ENCODE measurements at regions of chr6 and their contacts with region 1.

Region 1: DNA sequence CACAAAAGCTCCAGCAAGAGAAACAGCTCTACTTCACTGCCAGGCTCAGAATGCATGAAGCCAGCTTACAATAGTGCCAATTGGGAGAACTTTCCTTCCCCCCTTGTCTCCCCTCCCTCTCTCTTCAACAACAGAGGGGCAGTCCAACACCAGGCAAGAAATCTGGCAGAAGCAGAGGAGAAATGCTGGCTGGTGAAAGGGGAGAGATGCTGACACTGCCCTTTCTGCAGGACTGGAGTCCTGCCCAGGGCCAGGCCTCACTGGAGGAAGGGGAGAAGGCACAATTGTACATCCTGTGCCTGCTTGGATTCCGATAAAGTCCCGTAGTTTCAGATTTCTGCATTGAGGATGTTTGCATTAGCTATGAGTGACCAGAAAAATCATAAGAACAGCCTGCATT is 148.6 kb downstream of the LRRC1 start:
- DNase-seq: peak in 1 of 2 donors; percentile 56
- ATAC-seq: peak; percentile 84
- H3K4me3 ChIP-seq: no peak overlapping the region
- H3K27ac ChIP-seq: peak overlapping the region in 1 of 2 donors; percentile 52
- H3K4me1 ChIP-seq: peaks cover 0 to 2% of the 10 kb centered on the region in 2 donors
- H3K27me3 ChIP-seq: no peaks in the 10 kb centered on the region

Region 2: GRCh38 chr6:53794720-53795253 is 148.6 kb before region 1 on chr6 and contains the start of gene LRRC1:
- intact Hi-C with region 1: no loop called
- DNase-seq: peak; percentile 94 to 98
- ATAC-seq: peak; percentile 96
- H3K4me3 ChIP-seq: peak within 1 kb of the TSS; percentile 77 to 80
- H3K27ac ChIP-seq: peak within 1 kb of the TSS; percentile 54 to 70
- H3K4me1 ChIP-seq: no peaks in the 10 kb centered on the region
- H3K27me3 ChIP-seq: no peaks in the 10 kb centered on the region
- total RNA-seq, gene LRRC1: 25.3 to 25.4 TPM

Region 3: DNA sequence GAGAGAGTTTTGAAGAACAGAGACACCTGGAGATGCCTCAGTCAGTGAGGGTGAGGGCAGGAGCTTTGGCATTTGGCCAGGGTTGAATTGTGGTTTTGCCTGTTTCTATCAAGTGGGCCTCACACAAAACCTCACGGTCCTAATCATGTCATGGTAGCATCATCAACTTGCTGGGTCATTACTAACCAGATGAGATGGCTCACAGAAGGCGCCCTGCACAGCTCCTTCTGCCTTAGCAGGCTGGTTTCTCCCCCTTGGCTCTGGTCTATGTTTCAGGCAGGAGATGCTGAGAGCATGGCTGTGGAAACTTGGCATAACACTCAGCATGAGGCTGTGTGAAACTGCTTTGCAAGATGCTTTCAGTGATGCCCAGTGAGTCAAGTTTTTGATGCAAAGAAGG is 49.3 kb before region 1 on chr6:
- intact Hi-C with region 1: loop called in 1 of 2 experiments (anchors 5 kb)
- DNase-seq: no peak
- ATAC-seq: no peak
- H3K4me3 ChIP-seq: no peak overlapping the region
- H3K27ac ChIP-seq: no peak overlapping the region
- H3K4me1 ChIP-seq: peaks cover 2 to 7% of the 10 kb centered on the region in 2 donors
- H3K27me3 ChIP-seq: no peaks in the 10 kb centered on the region